ENCODE measurements at regions of chr6 and their contacts with region 1.

Region 1: DNA sequence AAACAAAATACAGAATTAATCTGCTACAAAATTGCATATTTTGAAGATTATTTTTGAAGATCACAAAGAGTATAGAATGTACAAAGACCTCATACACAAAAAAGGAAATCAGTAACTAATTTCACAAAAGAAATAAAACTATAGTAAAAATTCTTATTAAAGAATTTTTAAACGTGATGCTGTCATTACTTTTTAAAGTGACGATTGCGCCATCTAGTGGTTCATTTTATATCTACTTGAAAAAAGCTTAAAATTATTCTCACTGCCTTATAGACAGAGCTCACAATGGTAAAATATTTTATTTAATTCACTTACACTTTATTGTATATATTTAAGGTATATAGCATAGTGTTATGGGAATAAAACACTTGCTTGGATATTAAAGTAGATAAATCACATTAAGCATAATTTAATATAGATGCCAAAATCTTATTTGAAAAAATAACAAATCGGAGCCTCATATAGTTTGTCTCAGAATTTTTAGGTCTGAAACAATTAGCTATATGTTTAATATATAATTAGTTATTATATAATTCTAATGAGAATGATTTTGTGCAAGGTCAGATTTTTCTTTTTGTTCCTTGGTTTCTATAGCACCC is 128.8 kb downstream of the PHF3 start:
- ATAC-seq: peak in 1 of 8 experiments; percentile 27
- H3K4me3 ChIP-seq: no peak overlapping the region
- H3K27ac ChIP-seq: no peak overlapping the region
- H3K4me1 ChIP-seq: no peaks in the 10 kb centered on the region

Region 2: DNA sequence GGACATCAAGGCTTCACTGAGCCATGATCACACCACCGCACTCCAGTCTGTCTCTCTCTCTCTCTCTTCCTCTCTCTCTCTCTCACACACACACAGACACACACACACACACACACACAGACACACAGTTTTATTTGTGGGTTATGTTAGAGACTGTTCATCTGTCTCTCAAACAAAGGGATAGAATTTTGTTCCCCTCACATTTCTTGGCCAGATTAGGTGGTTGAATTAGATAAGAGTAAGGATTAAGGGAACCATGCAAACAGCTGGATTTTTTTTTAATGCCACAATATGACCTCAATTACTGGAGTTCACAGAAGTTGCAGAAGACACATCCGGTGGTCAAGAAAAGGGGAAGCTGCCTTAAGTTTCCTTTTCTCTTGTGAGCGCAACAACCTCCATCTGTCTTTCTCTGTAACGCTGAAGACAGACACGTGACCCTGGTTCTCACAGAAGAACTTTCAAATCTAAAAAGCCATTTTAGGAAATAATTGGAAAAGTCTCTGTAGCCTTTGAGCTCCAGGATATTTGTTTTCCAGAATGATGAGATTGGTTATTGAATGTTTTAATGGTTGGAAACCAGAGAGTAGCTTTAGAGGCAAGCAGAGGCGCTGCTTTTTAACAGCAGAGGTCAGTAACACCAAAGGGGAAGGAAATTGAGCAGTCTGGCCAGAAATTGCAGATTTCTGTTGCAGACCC is 411.7 kb before region 1 on chr6:
- in situ Hi-C with region 1: loop called in 1 of 9 experiments (anchors 25 kb)
- ATAC-seq: peak in 7 of 8 experiments; percentile 24 to 82 (median 63)
- H3K4me3 ChIP-seq: no peak overlapping the region
- H3K27ac ChIP-seq: no peak overlapping the region
- H3K4me1 ChIP-seq: no peaks in the 10 kb centered on the region

Region 3: GRCh38 chr6:63598049-63599036 is 166.1 kb before region 1 on chr6:
- in situ Hi-C with region 1: loop called in 2 of 9 experiments (anchors 10 to 25 kb)
- ATAC-seq: peak; percentile 94 to 99 (median 98)
- H3K4me3 ChIP-seq: peak overlapping the region; percentile 41 to 46 (median 43)
- H3K27ac ChIP-seq: peak overlapping the region in 1 of 2 donors; percentile 56
- H3K4me1 ChIP-seq: no peaks in the 10 kb centered on the region

Region 4: GRCh38 chr6:64249129-64249528 is 484.7 kb after region 1 on chr6:
- in situ Hi-C with region 1: no loop called
- ATAC-seq: no peak
- H3K4me3 ChIP-seq: no peak overlapping the region
- H3K27ac ChIP-seq: no peak overlapping the region
- H3K4me1 ChIP-seq: no peaks in the 10 kb centered on the region